Transverse colon (tissue), 4 donors: ENCODE measurements at regions of chr1 and their contacts with region 1.

Region 1: GRCh38 chr1:15128520-15129313 is 24.8 kb upstream of the TMEM51 start:
- DNase-seq: peak; percentile 81
- H3K4me3 ChIP-seq: no peak overlapping the region
- H3K27ac ChIP-seq: no peak overlapping the region
- H3K4me1 ChIP-seq: no peaks in the 10 kb centered on the region
- H3K27me3 ChIP-seq: no peaks in the 10 kb centered on the region
- CTCF ChIP-seq: peak; percentile 88 to 93 (median 91)
- EP300 ChIP-seq: no peak
- POLR2A ChIP-seq: no peak

Region 2: DNA sequence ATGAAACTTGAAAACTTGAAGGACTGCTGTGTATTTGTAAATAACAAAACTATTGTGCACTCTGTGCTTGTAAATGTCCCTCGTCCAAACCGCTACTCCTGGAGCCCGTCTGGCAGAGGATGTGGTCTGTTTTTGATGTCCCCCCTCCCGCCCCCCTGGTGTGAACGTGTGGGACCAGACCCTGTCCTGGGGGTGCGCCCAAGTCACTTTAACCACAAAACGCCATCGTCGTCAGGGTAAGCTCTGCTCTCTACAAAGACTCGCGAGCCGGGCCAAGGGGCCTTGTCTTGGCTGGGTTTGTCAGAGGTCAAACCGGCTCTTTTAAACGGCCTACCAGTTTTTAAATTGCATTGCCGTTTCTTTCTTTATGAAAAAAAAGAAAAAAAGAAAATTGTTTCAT is 62.5 kb before region 1 on chr1:
- in situ Hi-C with region 1: no loop called
- intact Hi-C with region 1: no loop called
- DNase-seq: no peak
- H3K4me3 ChIP-seq: no peak overlapping the region
- H3K27ac ChIP-seq: no peak overlapping the region
- H3K4me1 ChIP-seq: no peaks in the 10 kb centered on the region
- H3K27me3 ChIP-seq: no peaks in the 10 kb centered on the region
- CTCF ChIP-seq: no peak
- EP300 ChIP-seq: no peak
- POLR2A ChIP-seq: no peak

Region 3: GRCh38 chr1:15188130-15188524 is 59.4 kb after region 1 on chr1:
- in situ Hi-C with region 1: no loop called
- intact Hi-C with region 1: no loop called
- DNase-seq: no peak
- H3K4me3 ChIP-seq: no peak overlapping the region
- H3K27ac ChIP-seq: peak overlapping the region; percentile 39 to 69 (median 64)
- H3K4me1 ChIP-seq: peaks cover 20 to 56% (median 34%) of the 10 kb centered on the region in 4 donors
- H3K27me3 ChIP-seq: no peaks in the 10 kb centered on the region
- CTCF ChIP-seq: no peak
- EP300 ChIP-seq: no peak
- POLR2A ChIP-seq: no peak

Region 4: DNA sequence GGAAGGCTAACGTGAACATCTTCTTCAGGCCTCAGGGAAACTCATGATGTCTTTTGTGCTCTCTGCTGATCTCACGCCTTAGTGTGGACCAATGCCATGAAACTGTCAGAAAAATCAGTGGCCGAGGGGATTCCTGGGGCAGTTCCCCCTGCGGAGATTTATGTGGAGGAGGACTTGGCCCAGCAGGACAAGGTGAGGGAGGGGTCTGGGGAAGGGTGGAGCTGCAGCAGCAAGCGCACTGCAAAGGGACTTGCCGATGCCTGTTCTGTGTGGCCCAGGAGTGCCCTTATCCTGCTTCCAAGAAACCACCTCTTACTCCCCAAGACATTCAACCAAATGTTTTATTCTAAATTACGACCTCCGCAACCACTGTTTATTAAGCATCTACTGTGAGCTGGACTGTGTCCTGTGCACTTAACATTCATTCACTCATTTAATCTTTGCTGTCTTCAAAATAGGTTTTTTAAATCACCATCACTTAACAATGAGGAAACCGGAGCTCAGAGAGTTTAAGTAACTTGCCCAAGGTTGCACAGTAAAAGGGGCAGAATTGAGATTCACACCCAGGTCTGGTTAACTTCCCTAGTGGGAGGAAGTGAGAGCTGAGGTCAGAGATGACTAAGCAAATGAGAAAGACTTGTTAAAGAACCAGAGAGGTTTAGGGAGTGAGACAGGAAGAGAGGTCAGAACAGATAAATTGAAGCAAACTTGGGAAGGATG is 168.0 kb after region 1 on chr1:
- in situ Hi-C with region 1: loop called in 3 of 4 experiments (anchors 5 to 10 kb)
- intact Hi-C with region 1: no loop called
- DNase-seq: no peak
- H3K4me3 ChIP-seq: no peak overlapping the region
- H3K27ac ChIP-seq: no peak overlapping the region
- H3K4me1 ChIP-seq: no peaks in the 10 kb centered on the region
- H3K27me3 ChIP-seq: no peaks in the 10 kb centered on the region
- CTCF ChIP-seq: no peak
- EP300 ChIP-seq: no peak
- POLR2A ChIP-seq: no peak

Region 5: DNA sequence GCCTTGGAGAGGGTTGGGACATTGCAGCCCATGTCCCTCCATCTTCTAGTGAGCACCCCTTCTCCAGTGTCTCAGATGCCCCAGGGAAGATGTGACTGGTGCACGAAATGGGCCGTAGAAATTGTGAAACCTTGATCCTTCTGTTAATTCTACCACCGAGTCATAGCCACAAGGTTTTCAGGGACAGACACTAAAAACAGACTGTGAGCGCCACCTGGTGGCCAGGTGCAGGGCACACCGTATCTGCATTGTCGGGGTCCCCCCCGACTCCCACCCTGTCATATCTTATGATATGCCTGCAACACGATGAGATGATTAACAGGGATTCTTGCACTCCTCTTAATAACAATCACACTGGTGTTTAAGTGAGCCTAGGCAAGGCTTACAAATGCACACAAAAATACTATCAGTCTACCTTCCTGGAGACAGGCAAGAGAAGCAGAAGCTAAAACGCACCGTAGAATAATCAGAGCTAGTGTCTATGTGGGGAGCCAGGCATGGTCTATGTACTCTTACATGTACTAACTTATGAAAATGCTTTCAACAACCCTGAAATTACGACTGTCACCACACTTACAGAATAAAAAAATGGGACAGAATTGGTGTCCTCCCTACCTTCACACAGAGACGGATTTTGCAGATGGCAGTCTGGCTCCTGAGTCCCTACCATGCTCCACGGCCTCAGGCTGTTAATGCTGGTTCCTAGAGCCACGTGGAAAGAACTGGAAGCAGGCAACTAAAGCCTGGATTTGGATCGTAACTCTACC is 176.2 kb after region 1 on chr1:
- in situ Hi-C with region 1: loop called in 2 of 4 experiments (anchors 10 kb)
- intact Hi-C with region 1: loop called (anchors 2 kb)
- DNase-seq: peak; percentile 75
- H3K4me3 ChIP-seq: no peak overlapping the region
- H3K27ac ChIP-seq: no peak overlapping the region
- H3K4me1 ChIP-seq: peaks cover 0 to 22% (median 13%) of the 10 kb centered on the region in 4 donors
- H3K27me3 ChIP-seq: no peaks in the 10 kb centered on the region
- CTCF ChIP-seq: peak; percentile 88 to 98 (median 92)
- EP300 ChIP-seq: no peak
- POLR2A ChIP-seq: no peak